Aorta (tissue), 5 donors: ENCODE measurements at regions of chr7 and their contacts with region 1.

Region 1: GRCh38 chr7:31419505-31420055 is 79.1 kb upstream of the NEUROD6 start:
- DNase-seq: no peak
- ATAC-seq: no peak
- H3K4me3 ChIP-seq: no peak overlapping the region
- H3K27ac ChIP-seq: no peak overlapping the region
- H3K4me1 ChIP-seq: no peaks in the 10 kb centered on the region
- H3K27me3 ChIP-seq: no peaks in the 10 kb centered on the region

Region 2: DNA sequence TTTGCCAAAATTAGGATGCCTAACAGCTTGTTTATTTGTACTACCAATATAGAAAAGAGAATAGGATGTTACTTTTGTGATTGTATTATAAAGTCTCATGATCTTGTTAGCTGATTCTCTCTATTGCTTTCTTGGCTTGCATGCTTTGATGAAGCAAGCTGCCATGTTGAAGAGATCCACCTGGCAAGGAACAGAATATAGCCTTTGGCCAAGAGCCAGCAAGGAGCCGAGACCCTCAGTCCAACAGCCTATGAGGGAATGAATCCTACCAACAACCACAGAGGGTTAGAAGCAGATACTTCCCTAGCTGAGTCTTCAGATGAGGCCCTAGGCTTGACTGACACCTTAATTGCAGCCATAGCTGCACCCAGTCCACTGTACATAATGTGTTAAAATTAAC is 120.2 kb before region 1 on chr7:
- intact Hi-C with region 1: no loop called
- DNase-seq: no peak
- ATAC-seq: no peak
- H3K4me3 ChIP-seq: no peak overlapping the region
- H3K27ac ChIP-seq: no peak overlapping the region
- H3K4me1 ChIP-seq: peaks cover 0 to 2% of the 10 kb centered on the region in 2 donors
- H3K27me3 ChIP-seq: no peaks in the 10 kb centered on the region

Region 3: GRCh38 chr7:31336202-31337001 is 83.2 kb before region 1 on chr7:
- intact Hi-C with region 1: no loop called
- DNase-seq: peak in 1 of 2 donors; percentile 39
- ATAC-seq: no peak
- H3K4me3 ChIP-seq: no peak overlapping the region
- H3K27ac ChIP-seq: no peak overlapping the region
- H3K4me1 ChIP-seq: no peaks in the 10 kb centered on the region
- H3K27me3 ChIP-seq: no peaks in the 10 kb centered on the region

Region 4: DNA sequence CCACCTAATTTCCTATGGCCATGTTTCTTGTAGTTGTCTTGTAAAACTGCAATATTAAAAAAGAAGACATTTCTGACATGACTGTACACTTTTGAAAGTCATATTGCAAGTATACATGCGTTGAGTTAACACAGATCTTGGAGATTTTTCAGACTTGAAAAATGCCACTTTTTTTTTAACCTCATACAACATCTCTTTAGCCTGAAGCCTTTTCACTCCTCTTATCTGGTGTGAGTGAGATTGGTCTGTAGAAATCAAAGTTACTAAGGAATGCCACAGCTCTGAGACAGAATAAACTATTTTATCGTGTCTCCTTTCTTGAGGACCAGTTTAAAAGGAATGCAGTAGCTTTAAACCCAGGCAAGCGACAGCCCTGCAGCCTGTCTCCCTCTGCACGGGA is 35.1 kb before region 1 on chr7:
- intact Hi-C with region 1: loop called in 1 of 2 experiments (anchors 2 kb)
- DNase-seq: no peak
- ATAC-seq: no peak
- H3K4me3 ChIP-seq: no peak overlapping the region
- H3K27ac ChIP-seq: no peak overlapping the region
- H3K4me1 ChIP-seq: no peaks in the 10 kb centered on the region
- H3K27me3 ChIP-seq: no peaks in the 10 kb centered on the region

Region 5: DNA sequence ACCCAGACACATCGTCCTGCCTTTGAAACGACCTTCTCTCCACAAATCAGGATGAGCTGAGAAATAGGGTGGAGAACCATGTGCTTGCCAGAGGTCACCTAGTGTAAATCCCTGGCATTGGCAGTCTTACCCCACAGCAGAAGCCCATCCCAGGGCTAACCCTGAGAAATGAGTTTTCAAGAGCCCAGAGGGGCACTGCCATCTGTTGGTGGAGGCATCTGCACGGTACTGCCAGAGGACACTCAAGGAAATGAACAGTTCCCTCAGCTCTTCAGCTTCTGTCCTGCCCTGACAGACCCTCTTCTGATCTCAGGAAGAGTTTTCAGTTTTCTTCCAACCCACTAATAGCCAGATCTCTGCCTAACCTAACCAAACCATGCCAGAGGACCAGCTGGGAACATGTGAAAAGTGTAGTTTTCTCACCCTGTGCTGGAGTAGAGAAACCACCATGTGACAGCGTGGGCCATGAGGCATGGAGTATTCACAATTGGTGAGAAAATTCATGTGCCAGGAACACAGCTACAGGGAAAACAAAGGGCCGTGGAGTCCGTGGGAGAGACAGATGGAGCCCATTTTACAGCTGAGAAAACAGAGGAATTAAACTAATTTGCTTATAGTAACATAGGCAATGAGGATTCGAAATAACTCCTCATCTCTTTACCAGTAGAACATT is 56.6 kb after region 1 on chr7:
- intact Hi-C with region 1: no loop called
- DNase-seq: no peak
- ATAC-seq: no peak
- H3K4me3 ChIP-seq: no peak overlapping the region
- H3K27ac ChIP-seq: no peak overlapping the region
- H3K4me1 ChIP-seq: no peaks in the 10 kb centered on the region
- H3K27me3 ChIP-seq: no peaks in the 10 kb centered on the region